ENCODE measurements at regions of chr1 and their contacts with region 1.

Region 1: DNA sequence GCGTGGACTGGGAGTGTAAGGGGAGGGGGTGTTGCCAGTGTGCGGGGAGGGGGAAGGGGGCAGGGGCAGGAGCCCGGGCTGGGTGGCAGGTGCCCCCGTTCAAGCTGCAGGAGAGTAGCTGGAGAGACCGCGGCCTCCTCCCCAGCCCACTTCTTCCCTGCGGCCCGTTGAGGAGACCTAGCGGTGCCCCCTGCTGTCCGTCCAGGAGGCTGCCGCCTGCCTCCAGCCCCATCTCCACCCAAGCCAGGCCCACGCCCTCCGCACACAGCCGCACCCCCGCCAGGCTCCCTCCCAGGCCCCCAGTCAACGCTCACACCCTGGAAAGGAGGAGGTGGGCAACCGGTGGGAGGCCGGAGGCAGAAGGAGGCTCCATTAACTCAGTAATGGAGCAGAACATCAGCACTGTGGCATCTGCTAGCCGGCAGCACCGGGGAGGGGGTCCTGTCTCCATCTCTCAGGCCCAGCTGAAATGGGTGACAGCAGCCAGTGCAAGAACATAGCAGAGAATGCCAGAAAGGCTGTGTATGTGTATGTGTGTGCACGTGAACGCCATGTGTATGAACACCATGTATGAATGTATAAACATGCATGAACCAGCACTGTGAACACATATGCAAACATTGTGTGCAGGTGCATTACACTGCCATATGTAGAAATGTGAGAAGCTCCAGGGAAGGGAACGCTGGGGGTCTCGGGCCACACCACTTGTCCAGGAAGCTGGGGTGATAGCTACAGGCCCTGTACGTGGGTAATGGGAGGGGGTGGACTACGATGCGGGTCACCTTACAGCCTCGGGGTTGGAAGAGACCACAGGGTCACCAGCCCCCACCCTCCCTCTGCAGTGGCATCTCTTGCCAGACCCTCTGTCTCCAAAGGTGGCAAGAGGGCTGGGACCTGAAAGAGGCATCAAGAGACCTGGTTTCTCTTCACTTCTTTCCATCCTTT is 84.6 kb downstream of the SYT2 start:
- DNase-seq: peak; percentile 29 to 76 (median 45)
- ATAC-seq: peak; percentile 60
- H3K4me3 ChIP-seq: no peak overlapping the region
- H3K4me3 Mint-ChIP-seq: no peak overlapping the region
- H3K27ac ChIP-seq: no peak overlapping the region
- H3K27ac Mint-ChIP-seq: no peak overlapping the region
- H3K4me1 ChIP-seq: peaks cover 53% of the 10 kb centered on the region
- H3K4me1 Mint-ChIP-seq: peaks cover 36% of the 10 kb centered on the region
- H3K27me3 ChIP-seq: peaks cover 3 to 5% of the 10 kb centered on the region in 2 experiments
- H3K27me3 Mint-ChIP-seq: peaks cover 27% of the 10 kb centered on the region
- CTCF ChIP-seq: peak; percentile 58

Region 2: GRCh38 chr1:202335284-202335683 is 290.4 kb before region 1 on chr1:
- CTCF ChIA-PET with region 1: no interaction called
- POLR2A ChIA-PET with region 1: no interaction called
- intact Hi-C with region 1: loop called in 1 of 2 experiments (anchors 5 kb)
- DNase-seq: no peak
- ATAC-seq: no peak
- H3K4me3 ChIP-seq: no peak overlapping the region
- H3K4me3 Mint-ChIP-seq: no peak overlapping the region
- H3K27ac ChIP-seq: no peak overlapping the region
- H3K27ac Mint-ChIP-seq: no peak overlapping the region
- H3K4me1 ChIP-seq: peaks cover 6% of the 10 kb centered on the region
- H3K4me1 Mint-ChIP-seq: no peaks in the 10 kb centered on the region
- H3K27me3 ChIP-seq: no peaks in the 10 kb centered on the region
- H3K27me3 Mint-ChIP-seq: no peaks in the 10 kb centered on the region
- CTCF ChIP-seq: no peak

Region 3: GRCh38 chr1:203273206-203273868 is 647.6 kb after region 1 on chr1:
- CTCF ChIA-PET with region 1: no interaction called
- POLR2A ChIA-PET with region 1: no interaction called
- intact Hi-C with region 1: no loop called
- DNase-seq: peak; percentile 86 to 97 (median 92)
- ATAC-seq: peak; percentile 53
- H3K4me3 ChIP-seq: peak overlapping the region; percentile 49
- H3K4me3 Mint-ChIP-seq: peak overlapping the region; percentile 55
- H3K27ac ChIP-seq: peak overlapping the region; percentile 33 to 73
- H3K27ac Mint-ChIP-seq: peak overlapping the region; percentile 85
- H3K4me1 ChIP-seq: peaks cover 75% of the 10 kb centered on the region
- H3K4me1 Mint-ChIP-seq: peaks cover 63% of the 10 kb centered on the region
- H3K27me3 ChIP-seq: no peaks in the 10 kb centered on the region
- H3K27me3 Mint-ChIP-seq: no peaks in the 10 kb centered on the region
- CTCF ChIP-seq: peak; percentile 97

Measured in CD4-positive, alpha-beta T cell (primary cell).